PC-9 (cell line): ENCODE measurements at regions of chr15 and their contacts with region 1.

Region 1: GRCh38 chr15:31326156-31326732 is 391 bp upstream of the KLF13 start:
- DNase-seq: peak in 1 of 2 experiments; percentile 88
- H3K4me3 ChIP-seq: no peak overlapping the region
- H3K27ac ChIP-seq: no peak overlapping the region
- H3K4me1 ChIP-seq: no peaks in the 10 kb centered on the region
- H3K27me3 ChIP-seq: no peaks in the 10 kb centered on the region
- CTCF ChIP-seq: no peak

Region 2: DNA sequence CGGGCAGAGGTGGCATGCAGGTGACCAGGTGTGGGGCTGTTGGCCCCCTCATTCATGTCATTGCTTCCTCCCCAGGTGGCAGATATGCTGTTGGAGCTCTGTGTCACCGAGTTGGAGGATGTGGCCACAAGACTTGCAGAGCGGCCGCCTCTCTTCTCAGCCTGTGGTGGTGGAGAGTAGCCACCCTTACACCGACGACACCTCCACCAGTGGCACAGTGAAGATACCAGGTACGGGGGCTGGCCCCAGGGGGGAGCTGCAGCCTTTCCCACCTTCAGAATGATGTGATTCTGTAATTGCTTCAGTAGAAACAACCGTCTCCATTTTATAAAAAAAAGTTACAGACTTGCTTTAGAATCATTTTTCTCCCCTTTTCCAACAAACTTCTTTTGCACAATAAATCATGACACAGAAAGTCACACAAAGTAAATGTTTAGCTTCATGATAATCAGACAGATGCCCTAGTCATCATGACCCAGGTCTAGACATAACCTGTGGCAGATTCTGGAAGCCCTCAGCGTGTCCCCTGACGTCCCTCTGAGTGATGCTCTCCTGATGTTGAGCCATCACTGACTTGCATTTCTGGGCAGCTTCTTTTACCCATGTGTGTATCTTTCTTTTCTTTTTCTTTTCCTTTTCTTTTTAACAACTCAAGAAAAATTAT is 498.5 kb before region 1 on chr15:
- CTCF ChIA-PET with region 1: no interaction called
- POLR2A ChIA-PET with region 1: no interaction called
- intact Hi-C with region 1: no loop called
- DNase-seq: no peak
- H3K4me3 ChIP-seq: no peak overlapping the region
- H3K27ac ChIP-seq: no peak overlapping the region
- H3K4me1 ChIP-seq: no peaks in the 10 kb centered on the region
- H3K27me3 ChIP-seq: no peaks in the 10 kb centered on the region; the same call in 1 of the 2 replicates
- CTCF ChIP-seq: no peak

Region 3: DNA sequence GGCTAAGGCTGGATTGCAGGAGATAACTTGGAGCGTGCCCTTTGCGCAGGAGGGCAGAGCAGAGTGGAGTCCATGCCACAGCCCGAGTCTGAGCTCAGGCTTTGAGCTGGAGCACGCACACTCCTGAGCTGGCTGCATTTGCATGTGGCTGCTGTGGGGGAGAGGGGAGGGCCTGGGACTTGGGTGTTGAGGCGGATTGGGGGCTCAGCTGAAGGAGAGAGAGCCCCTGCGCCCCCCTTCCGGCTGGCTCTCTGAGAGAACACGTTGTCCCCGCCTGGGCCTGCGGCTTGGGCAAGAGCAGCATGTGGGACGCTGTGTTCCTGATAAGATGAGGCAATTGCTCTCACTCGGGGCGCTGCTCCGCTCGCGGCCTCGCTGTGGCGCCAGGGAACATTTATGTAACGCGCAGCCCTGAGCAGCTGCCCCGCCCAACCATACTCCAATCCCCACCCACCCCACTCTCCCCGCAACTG is 39.4 kb after region 1 on chr15:
- CTCF ChIA-PET with region 1: no interaction called
- POLR2A ChIA-PET with region 1: no interaction called
- intact Hi-C with region 1: no loop called
- DNase-seq: no peak
- H3K4me3 ChIP-seq: no peak overlapping the region
- H3K27ac ChIP-seq: no peak overlapping the region
- H3K4me1 ChIP-seq: no peaks in the 10 kb centered on the region
- H3K27me3 ChIP-seq: peaks cover 45% of the 10 kb centered on the region; the same call in 1 of the 2 replicates
- CTCF ChIP-seq: no peak

Region 4: GRCh38 chr15:31396881-31397560 is 70.8 kb after region 1 on chr15:
- CTCF ChIA-PET with region 1: no interaction called
- POLR2A ChIA-PET with region 1: no interaction called
- intact Hi-C with region 1: loop called (anchors 2 kb)
- DNase-seq: peak in 1 of 2 experiments; percentile 40
- H3K4me3 ChIP-seq: no peak overlapping the region
- H3K27ac ChIP-seq: no peak overlapping the region
- H3K4me1 ChIP-seq: no peaks in the 10 kb centered on the region
- H3K27me3 ChIP-seq: peaks cover 26% of the 10 kb centered on the region; the same call in 1 of the 2 replicates
- CTCF ChIP-seq: no peak